ENCODE measurements at regions of chr3 and their contacts with region 1.

Region 1: DNA sequence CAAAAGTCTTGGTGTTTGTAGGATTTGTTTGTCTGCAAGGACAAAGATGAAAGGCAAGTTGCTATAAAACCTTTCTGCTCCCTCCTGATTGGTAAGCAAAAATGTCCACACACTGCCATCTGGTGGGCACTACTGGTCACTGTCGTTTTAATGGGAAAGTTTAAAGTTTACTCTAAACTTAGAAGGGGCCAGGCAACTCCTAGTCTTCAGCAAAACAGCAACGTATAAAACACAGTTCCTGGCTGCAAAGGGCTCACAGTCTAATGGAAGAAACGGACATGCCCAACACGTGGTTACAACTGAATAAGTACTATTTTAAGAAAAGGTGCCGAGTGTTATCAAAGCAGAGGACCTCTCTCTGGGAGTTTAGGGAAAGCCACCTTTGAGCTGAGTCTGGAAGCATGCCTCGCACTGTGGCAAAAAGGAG is 23.7 kb upstream of the TPRG1 start:
- DNase-seq: peak; percentile 85
- H3K4me3 ChIP-seq: no peak overlapping the region
- H3K27ac ChIP-seq: peak overlapping the region; percentile 42 to 71
- H3K4me1 ChIP-seq: peaks cover 6% of the 10 kb centered on the region
- H3K27me3 ChIP-seq: no peaks in the 10 kb centered on the region
- CTCF ChIP-seq: peak; percentile 85 to 96 (median 94)
- POLR2A ChIP-seq: no peak

Region 2: DNA sequence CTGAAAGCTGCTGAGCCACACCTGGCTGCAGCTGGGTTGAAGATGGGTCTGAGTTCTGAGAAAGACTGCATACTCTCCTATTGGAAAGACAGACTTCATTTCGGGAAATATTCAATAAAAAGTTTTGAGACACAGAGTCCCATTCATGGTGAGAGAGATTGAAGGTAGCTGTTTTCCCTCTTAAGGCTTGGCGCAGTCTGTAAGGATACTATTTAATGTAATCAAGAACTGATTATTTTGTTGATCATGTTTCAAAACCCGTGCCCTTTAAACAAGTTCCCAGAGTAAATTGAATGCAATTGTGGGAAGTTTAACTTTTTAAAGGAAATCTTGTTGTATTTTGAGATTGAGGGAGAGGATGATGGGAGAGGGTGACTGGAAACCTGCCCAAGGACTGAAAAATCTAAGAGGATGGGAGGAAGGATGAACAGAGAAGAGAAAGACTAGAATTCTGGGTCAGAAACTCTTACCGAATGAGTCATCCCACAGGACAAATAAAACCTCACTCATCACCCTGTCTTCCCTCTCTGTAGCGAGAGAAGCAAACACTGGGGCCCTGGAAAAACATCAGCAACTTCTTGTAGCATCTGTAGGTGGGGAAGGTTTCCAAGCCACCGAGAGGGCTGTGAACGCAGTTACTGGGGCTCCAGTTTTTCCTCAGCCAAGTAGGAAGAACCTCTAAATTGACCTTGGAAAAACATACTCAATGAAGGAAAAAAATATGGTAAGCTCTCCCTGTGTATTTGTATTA is 169.5 kb before region 1 on chr3:
- intact Hi-C with region 1: loop called (anchors 10 kb)
- DNase-seq: peak; percentile 74
- H3K4me3 ChIP-seq: no peak overlapping the region
- H3K27ac ChIP-seq: peak overlapping the region; percentile 26 to 46
- H3K4me1 ChIP-seq: peaks cover 20% of the 10 kb centered on the region
- H3K27me3 ChIP-seq: no peaks in the 10 kb centered on the region
- CTCF ChIP-seq: no peak
- POLR2A ChIP-seq: no peak